ENCODE measurements at regions of chr4 and their contacts with region 1.

Region 1: DNA sequence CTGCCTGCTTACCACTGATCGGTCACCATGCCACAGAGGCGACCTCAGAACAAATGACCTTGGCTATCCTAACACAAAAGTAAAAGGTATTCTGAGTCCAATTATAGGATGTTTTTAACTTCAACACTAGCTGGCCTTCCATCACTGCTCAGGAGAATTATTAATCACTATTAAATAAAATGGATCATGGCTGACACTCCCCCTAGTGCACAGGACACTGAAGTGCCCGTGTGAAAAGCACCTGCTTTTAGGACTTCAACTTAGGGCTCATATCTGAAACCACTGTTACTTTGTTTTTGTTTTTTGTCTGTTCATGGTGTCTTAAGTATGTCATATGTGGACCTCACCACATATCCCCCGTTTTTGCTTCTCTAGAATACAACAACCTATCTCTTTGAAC is 33.9 kb downstream of the STX18 start:
- DNase-seq: no peak
- H3K4me3 ChIP-seq: no peak overlapping the region
- H3K27ac ChIP-seq: no peak overlapping the region
- H3K4me1 ChIP-seq: no peaks in the 10 kb centered on the region
- H3K27me3 ChIP-seq: no peaks in the 10 kb centered on the region
- CTCF ChIP-seq: peak; percentile 22 to 60 (median 34)
- EP300 ChIP-seq: no peak
- POLR2A ChIP-seq: no peak
- RAD21 ChIP-seq: peak; percentile 32 to 37

Region 2: GRCh38 chr4:4356106-4357041 is 151.5 kb before region 1 on chr4:
- CTCF ChIA-PET with region 1: no interaction called
- POLR2A ChIA-PET with region 1: no interaction called
- DNase-seq: no peak
- H3K4me3 ChIP-seq: no peak overlapping the region
- H3K27ac ChIP-seq: no peak overlapping the region
- H3K4me1 ChIP-seq: peaks cover 0 to 4% (median 1%) of the 10 kb centered on the region in 4 experiments; a peak in 4 of 7 replicates
- H3K27me3 ChIP-seq: no peaks in the 10 kb centered on the region; a peak in 1 of 7 replicates
- CTCF ChIP-seq: no peak
- EP300 ChIP-seq: no peak
- POLR2A ChIP-seq: no peak
- RAD21 ChIP-seq: no peak

Region 3: GRCh38 chr4:4480685-4481398 is 27.1 kb before region 1 on chr4:
- CTCF ChIA-PET with region 1: interaction called, 21 read pairs
- POLR2A ChIA-PET with region 1: no interaction called
- DNase-seq: no peak
- H3K4me3 ChIP-seq: no peak overlapping the region; a peak in 1 of 8 replicates
- H3K27ac ChIP-seq: no peak overlapping the region
- H3K4me1 ChIP-seq: peaks cover 2 to 23% (median 10%) of the 10 kb centered on the region in 4 experiments
- H3K27me3 ChIP-seq: no peaks in the 10 kb centered on the region
- CTCF ChIP-seq: peak in 1 of 3 experiments; percentile 8; a peak in 2 of 4 replicates
- EP300 ChIP-seq: no peak
- POLR2A ChIP-seq: no peak
- RAD21 ChIP-seq: peak in 1 of 2 experiments; percentile 18; a peak in 2 of 4 replicates

Region 4: DNA sequence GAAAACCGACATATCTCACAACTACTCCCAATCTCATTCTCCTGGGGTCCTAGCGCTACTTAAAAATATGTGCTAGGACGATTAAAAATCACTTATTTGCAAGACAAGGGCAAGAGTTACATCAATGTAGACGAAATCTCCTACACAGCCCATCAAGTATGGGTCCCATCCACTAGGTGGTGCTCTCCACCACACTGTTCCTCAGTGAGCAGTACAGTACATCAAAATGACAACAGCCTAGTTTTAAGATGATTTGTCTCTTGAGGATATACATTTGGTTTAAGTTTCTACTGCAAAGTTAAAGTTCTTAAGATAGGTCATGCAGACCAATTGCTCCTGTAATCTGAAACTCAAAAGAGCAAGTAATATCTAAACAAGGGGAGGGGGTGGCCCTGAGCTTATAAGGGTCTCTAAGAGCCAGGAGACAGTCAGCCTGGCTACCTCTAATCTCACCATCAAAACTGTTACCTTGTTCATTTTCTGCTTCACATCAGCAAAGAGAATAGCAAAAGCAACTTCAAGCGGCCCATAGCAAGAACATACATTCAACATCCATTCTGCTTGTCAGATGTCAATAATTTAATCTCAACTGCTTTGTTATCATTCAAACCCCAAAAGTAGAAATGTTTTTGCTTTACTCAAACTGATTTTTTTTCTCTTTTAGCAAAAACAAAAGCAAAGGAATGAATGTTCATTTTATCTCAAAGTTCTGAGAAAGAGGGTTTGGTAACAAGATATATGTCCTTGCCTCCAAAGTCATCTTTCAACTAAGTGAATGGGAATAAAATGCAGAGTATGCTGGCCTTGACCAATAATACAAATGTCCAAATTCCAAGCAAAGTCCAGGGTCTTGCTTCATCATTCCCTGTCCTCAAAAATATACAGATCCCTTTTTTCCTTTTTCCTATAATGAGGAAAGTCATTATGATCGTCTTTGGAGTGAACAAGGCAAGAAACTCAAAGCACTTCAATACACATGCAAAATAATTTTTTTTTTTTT is 19.2 kb before region 1 on chr4:
- CTCF ChIA-PET with region 1: interaction called, 21 read pairs
- POLR2A ChIA-PET with region 1: interaction called, 3 read pairs
- DNase-seq: peak; percentile 15 to 74
- H3K4me3 ChIP-seq: no peak overlapping the region
- H3K27ac ChIP-seq: no peak overlapping the region
- H3K4me1 ChIP-seq: peaks cover 0 to 4% (median 2%) of the 10 kb centered on the region in 4 experiments; a peak in 4 of 7 replicates
- H3K27me3 ChIP-seq: peaks cover 0 to 1% (median 0%) of the 10 kb centered on the region in 4 experiments; a peak in 1 of 7 replicates
- CTCF ChIP-seq: peak; percentile 53 to 94 (median 74)
- EP300 ChIP-seq: no peak
- POLR2A ChIP-seq: no peak
- RAD21 ChIP-seq: peak; percentile 87 to 88

Region 5: DNA sequence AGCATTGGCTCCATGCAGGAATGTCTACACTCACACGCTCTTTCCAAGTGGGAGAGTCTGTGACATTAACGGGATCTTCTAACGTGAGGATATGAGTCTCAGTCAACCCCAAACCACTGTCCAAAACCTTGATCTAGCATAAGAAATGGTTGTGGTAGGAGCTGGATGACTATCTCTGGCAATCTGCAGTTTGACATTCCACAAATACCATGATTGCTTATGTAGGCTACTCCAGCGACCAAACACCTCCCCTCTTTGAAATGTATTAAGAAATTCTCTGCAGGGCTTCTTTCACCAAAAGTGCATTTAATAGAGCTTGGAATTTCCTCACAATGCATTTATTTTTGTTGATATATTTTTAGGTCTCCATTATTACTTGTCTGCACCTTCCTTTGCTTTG is 48.0 kb after region 1 on chr4:
- CTCF ChIA-PET with region 1: no interaction called
- POLR2A ChIA-PET with region 1: no interaction called
- DNase-seq: no peak
- H3K4me3 ChIP-seq: no peak overlapping the region
- H3K27ac ChIP-seq: no peak overlapping the region
- H3K4me1 ChIP-seq: peaks cover 0 to 4% (median 1%) of the 10 kb centered on the region in 4 experiments; a peak in 2 of 7 replicates
- H3K27me3 ChIP-seq: no peaks in the 10 kb centered on the region
- CTCF ChIP-seq: no peak
- EP300 ChIP-seq: no peak
- POLR2A ChIP-seq: no peak
- RAD21 ChIP-seq: no peak